ENCODE measurements at regions of chr15 and their contacts with region 1.

Region 1: DNA sequence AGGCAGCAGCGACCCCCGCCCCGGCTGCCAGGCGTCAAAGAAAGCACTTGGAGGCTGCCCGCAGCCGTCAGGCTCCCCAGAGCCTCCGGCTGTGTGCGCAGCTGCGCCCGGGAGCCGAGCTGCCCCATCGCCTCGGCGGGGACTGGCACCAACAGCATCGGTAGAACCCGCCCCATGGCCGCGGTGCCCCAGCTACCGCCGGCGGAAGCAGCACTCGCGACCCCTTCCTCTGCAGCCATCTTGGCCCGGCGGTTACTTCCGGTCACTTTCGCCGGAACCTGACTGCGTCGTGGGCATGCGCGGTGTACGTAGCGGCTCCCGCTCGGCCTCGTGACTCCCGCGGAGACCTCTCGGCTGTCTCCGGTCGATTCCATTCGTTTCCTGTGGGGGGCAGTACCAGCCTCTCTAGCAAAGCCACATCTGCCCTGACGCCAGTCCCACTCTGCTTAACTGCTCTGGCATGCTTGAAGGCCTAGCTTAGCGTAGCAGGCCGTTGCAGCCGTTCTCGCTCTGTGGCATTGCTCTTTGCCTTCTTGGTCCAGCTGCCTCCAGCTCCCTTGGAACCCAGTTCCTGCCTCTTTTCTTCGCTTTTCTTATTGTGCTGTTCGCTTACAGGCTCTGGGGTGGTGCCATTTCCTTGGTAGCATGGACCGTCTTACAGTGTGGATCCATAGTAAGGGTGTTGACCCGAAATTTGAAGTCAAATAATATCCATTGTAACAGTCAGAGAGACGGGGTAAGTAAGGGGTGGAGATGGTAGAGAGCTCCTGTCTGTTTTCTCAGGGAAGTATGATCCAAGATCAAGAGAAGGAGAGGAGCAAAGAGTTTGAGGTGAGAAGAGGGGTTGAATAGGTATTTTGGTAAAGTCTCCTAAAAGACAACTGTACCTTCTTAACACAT is at the start of gene SPG11:
- DNase-seq: peak; percentile 93 to 99 (median 96)
- ATAC-seq: peak; percentile 78
- H3K4me3 ChIP-seq: peak within 1 kb of the TSS; percentile 90
- H3K4me3 Mint-ChIP-seq: peak within 1 kb of the TSS; percentile 100
- H3K27ac ChIP-seq: peak within 1 kb of the TSS; percentile 97
- H3K27ac Mint-ChIP-seq: peak within 1 kb of the TSS; percentile 96
- H3K4me1 ChIP-seq: peaks cover 62% of the 10 kb centered on the region
- H3K4me1 Mint-ChIP-seq: peaks cover 76% of the 10 kb centered on the region
- H3K27me3 ChIP-seq: no peaks in the 10 kb centered on the region
- H3K27me3 Mint-ChIP-seq: no peaks in the 10 kb centered on the region
- CTCF ChIP-seq: peak; percentile 87
- total RNA-seq, gene SPG11: 49.9 to 51.3 TPM

Region 2: GRCh38 chr15:44565387-44566169 is 98.1 kb before region 1 on chr15:
- CTCF ChIA-PET with region 1: no interaction called
- POLR2A ChIA-PET with region 1: no interaction called
- intact Hi-C with region 1: no loop called
- DNase-seq: no peak
- ATAC-seq: no peak
- H3K4me3 ChIP-seq: no peak overlapping the region
- H3K4me3 Mint-ChIP-seq: no peak overlapping the region
- H3K27ac ChIP-seq: no peak overlapping the region
- H3K27ac Mint-ChIP-seq: peak overlapping the region; percentile 17
- H3K4me1 ChIP-seq: peaks cover 3% of the 10 kb centered on the region
- H3K4me1 Mint-ChIP-seq: peaks cover 13% of the 10 kb centered on the region
- H3K27me3 ChIP-seq: no peaks in the 10 kb centered on the region
- H3K27me3 Mint-ChIP-seq: no peaks in the 10 kb centered on the region
- CTCF ChIP-seq: no peak

Region 3: DNA sequence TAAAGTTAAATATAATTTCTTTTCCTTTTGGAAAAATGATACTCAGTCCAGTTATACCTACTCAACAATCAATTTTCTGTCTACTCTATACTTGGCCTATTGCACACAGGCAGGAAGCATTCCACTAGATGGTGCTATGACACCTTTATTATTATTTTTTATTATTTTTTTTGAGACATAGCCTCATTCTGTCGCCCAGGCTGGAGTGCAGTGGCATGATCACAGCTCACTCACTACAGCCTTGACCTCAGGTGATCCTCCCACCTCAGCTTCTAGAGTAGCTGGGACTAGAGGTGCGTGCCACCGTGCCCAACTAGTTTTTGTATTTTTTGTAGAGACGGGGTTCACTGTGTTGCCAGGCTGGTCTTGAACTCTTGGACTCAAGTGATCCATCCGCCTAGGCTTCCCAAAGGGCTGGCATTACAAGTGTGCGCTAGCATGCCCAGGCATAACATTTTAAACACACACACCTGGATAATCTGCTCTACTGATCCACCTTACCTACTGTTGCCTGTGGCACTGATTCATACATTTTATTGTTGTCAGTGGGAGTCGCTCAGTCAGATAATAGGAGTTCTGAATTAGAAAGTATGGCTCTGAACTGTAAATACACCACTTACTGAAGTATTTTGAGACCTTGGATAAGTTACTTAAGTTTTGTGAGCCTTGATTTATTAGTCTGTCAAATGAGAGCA is 70.5 kb before region 1 on chr15:
- CTCF ChIA-PET with region 1: interaction called, 7 read pairs
- POLR2A ChIA-PET with region 1: interaction called, 17 read pairs
- intact Hi-C with region 1: loop called in 1 of 2 experiments (anchors 10 kb)
- DNase-seq: peak in 7 of 14 experiments; percentile 6 to 71 (median 23)
- ATAC-seq: peak; percentile 85
- H3K4me3 ChIP-seq: no peak overlapping the region
- H3K4me3 Mint-ChIP-seq: no peak overlapping the region
- H3K27ac ChIP-seq: no peak overlapping the region
- H3K27ac Mint-ChIP-seq: peak overlapping the region; percentile 76
- H3K4me1 ChIP-seq: peaks cover 16% of the 10 kb centered on the region
- H3K4me1 Mint-ChIP-seq: peaks cover 14% of the 10 kb centered on the region
- H3K27me3 ChIP-seq: no peaks in the 10 kb centered on the region
- H3K27me3 Mint-ChIP-seq: no peaks in the 10 kb centered on the region
- CTCF ChIP-seq: peak; percentile 72

Region 4: GRCh38 chr15:44606740-44607139 is 56.9 kb before region 1 on chr15:
- CTCF ChIA-PET with region 1: no interaction called
- POLR2A ChIA-PET with region 1: interaction called, 11 read pairs
- intact Hi-C with region 1: no loop called
- DNase-seq: no peak
- ATAC-seq: no peak
- H3K4me3 ChIP-seq: no peak overlapping the region
- H3K4me3 Mint-ChIP-seq: no peak overlapping the region
- H3K27ac ChIP-seq: no peak overlapping the region
- H3K27ac Mint-ChIP-seq: no peak overlapping the region
- H3K4me1 ChIP-seq: no peaks in the 10 kb centered on the region
- H3K4me1 Mint-ChIP-seq: no peaks in the 10 kb centered on the region
- H3K27me3 ChIP-seq: no peaks in the 10 kb centered on the region
- H3K27me3 Mint-ChIP-seq: no peaks in the 10 kb centered on the region
- CTCF ChIP-seq: no peak

Region 5: DNA sequence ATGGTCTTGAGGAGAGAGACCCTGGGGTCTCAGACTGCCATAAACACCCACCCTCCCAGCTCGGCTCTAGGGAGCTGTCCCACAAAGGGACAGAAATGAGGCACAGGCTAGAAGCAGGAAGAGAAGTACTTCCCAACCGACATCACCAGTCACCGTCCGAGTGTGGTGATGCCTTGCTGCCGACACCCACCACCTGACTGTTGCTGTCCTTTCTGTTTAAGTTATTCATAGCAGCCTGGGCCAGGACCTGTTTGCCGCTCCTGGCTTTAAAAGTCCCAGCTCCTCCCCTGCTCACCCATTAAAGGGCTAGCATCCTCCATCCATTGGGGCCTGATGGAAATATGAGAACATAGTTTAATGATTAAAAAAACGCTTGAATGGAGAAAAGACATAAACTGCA is 13.0 kb after region 1 on chr15:
- CTCF ChIA-PET with region 1: interaction called, 37 read pairs
- POLR2A ChIA-PET with region 1: interaction called, 632 read pairs
- intact Hi-C with region 1: loop called in 1 of 2 experiments (anchors 2 kb)
- DNase-seq: peak in 4 of 14 experiments; percentile 40 to 79 (median 48)
- ATAC-seq: peak; percentile 22
- H3K4me3 ChIP-seq: peak overlapping the region; percentile 15
- H3K4me3 Mint-ChIP-seq: peak overlapping the region; percentile 75
- H3K27ac ChIP-seq: peak overlapping the region; percentile 51 to 84
- H3K27ac Mint-ChIP-seq: peak overlapping the region; percentile 89
- H3K4me1 ChIP-seq: peaks cover 100% of the 10 kb centered on the region
- H3K4me1 Mint-ChIP-seq: peaks cover 91% of the 10 kb centered on the region
- H3K27me3 ChIP-seq: no peaks in the 10 kb centered on the region
- H3K27me3 Mint-ChIP-seq: no peaks in the 10 kb centered on the region
- CTCF ChIP-seq: no peak

Region 6: DNA sequence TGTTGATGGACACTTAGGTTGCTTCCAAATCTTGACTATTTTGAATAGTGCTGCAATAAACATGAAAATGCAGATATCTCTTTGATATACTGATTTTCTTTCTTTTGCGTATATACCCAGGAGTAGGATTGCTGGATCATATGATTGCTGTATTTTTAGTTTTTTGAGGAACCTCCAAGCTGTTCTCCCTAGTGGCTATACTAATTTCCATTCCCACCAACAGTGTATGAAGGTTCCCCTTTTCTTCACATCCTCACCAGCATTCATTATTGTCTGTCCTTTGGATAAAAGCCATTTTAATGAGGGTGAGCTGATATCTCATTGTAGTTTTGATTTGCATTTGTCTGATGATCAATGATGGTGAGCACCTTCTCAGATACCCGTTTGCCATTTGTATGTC is 35.0 kb after region 1 on chr15:
- CTCF ChIA-PET with region 1: interaction called, 5 read pairs
- POLR2A ChIA-PET with region 1: interaction called, 4,232 read pairs
- intact Hi-C with region 1: no loop called
- DNase-seq: no peak
- ATAC-seq: no peak
- H3K4me3 ChIP-seq: no peak overlapping the region
- H3K4me3 Mint-ChIP-seq: no peak overlapping the region
- H3K27ac ChIP-seq: no peak overlapping the region
- H3K27ac Mint-ChIP-seq: no peak overlapping the region
- H3K4me1 ChIP-seq: peaks cover 9% of the 10 kb centered on the region
- H3K4me1 Mint-ChIP-seq: peaks cover 28% of the 10 kb centered on the region
- H3K27me3 ChIP-seq: no peaks in the 10 kb centered on the region
- H3K27me3 Mint-ChIP-seq: no peaks in the 10 kb centered on the region
- CTCF ChIP-seq: no peak

Region 7: DNA sequence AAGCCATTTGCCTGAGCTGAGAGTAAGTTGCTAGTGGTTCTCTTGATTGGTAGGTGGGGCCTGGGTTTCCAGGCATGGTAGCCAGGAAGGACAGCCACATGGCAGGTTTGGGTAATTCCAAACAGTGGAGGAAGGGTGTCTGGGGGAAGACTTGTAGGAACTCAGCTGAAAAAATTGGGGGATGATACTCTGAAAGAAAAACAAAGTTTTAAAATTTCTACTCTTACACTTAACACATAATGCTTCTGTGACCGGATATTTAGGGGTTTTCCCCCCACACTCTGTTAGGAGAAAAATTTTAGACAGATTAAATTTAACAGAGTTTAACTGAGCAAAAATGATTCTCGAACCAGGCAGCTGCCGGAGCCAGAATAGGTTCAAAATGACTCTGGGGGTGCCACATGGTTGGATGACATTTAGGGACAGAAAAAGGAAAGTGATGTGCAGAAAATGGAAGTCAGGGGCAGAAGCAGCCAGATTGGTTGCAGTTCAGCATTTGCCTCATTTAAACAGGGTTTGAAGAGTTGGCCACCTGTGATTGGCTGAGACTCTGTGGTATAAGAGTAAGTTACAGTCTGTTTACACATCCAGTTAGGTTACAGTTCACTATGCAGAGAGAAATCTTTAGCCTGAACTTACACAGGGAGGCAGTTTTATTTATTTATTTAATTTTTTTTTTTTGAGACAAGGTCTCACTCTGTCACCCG is 55.8 kb after region 1 on chr15:
- CTCF ChIA-PET with region 1: interaction called, 115 read pairs
- POLR2A ChIA-PET with region 1: interaction called, 4,232 read pairs
- intact Hi-C with region 1: no loop called
- DNase-seq: peak in 11 of 14 experiments; percentile 31 to 85 (median 50)
- ATAC-seq: peak; percentile 68
- H3K4me3 ChIP-seq: no peak overlapping the region
- H3K4me3 Mint-ChIP-seq: peak overlapping the region; percentile 81
- H3K27ac ChIP-seq: peak overlapping the region; percentile 72 to 74
- H3K27ac Mint-ChIP-seq: peak overlapping the region; percentile 100
- H3K4me1 ChIP-seq: peaks cover 83% of the 10 kb centered on the region
- H3K4me1 Mint-ChIP-seq: peaks cover 88% of the 10 kb centered on the region
- H3K27me3 ChIP-seq: no peaks in the 10 kb centered on the region
- H3K27me3 Mint-ChIP-seq: no peaks in the 10 kb centered on the region
- CTCF ChIP-seq: no peak

Region 8: GRCh38 chr15:44738340-44738984 is 74.8 kb after region 1 on chr15:
- CTCF ChIA-PET with region 1: interaction called, 98 read pairs
- POLR2A ChIA-PET with region 1: interaction called, 4,232 read pairs
- intact Hi-C with region 1: loop called (anchors 1 kb)
- DNase-seq: peak in 3 of 14 experiments; percentile 74 to 77 (median 74)
- ATAC-seq: peak; percentile 25
- H3K4me3 ChIP-seq: no peak overlapping the region
- H3K4me3 Mint-ChIP-seq: no peak overlapping the region
- H3K27ac ChIP-seq: no peak overlapping the region
- H3K27ac Mint-ChIP-seq: peak overlapping the region; percentile 62
- H3K4me1 ChIP-seq: peaks cover 37% of the 10 kb centered on the region
- H3K4me1 Mint-ChIP-seq: peaks cover 53% of the 10 kb centered on the region
- H3K27me3 ChIP-seq: no peaks in the 10 kb centered on the region
- H3K27me3 Mint-ChIP-seq: no peaks in the 10 kb centered on the region
- CTCF ChIP-seq: peak; percentile 91

Region 9: GRCh38 chr15:44909423-44909822 is 245.8 kb after region 1 on chr15:
- CTCF ChIA-PET with region 1: no interaction called
- POLR2A ChIA-PET with region 1: no interaction called
- intact Hi-C with region 1: no loop called
- DNase-seq: no peak
- ATAC-seq: no peak
- H3K4me3 ChIP-seq: no peak overlapping the region
- H3K4me3 Mint-ChIP-seq: no peak overlapping the region
- H3K27ac ChIP-seq: no peak overlapping the region
- H3K27ac Mint-ChIP-seq: no peak overlapping the region
- H3K4me1 ChIP-seq: no peaks in the 10 kb centered on the region
- H3K4me1 Mint-ChIP-seq: no peaks in the 10 kb centered on the region
- H3K27me3 ChIP-seq: no peaks in the 10 kb centered on the region
- H3K27me3 Mint-ChIP-seq: no peaks in the 10 kb centered on the region
- CTCF ChIP-seq: no peak